ENCODE measurements at regions of chr6 and their contacts with region 1.

Region 1: GRCh38 chr6:109690737-109691621 is at the starts of genes AK9 and FIG4:
- DNase-seq: peak; percentile 94
- H3K4me3 Mint-ChIP-seq: peak within 1 kb of the TSS; percentile 83
- H3K27ac Mint-ChIP-seq: peak within 1 kb of the TSS; percentile 81
- H3K4me1 Mint-ChIP-seq: peaks cover 26% of the 10 kb centered on the region
- H3K27me3 Mint-ChIP-seq: no peaks in the 10 kb centered on the region
- total RNA-seq, gene AK9: 1.7 TPM
- total RNA-seq, gene FIG4: 14.0 to 16.4 TPM

Region 2: DNA sequence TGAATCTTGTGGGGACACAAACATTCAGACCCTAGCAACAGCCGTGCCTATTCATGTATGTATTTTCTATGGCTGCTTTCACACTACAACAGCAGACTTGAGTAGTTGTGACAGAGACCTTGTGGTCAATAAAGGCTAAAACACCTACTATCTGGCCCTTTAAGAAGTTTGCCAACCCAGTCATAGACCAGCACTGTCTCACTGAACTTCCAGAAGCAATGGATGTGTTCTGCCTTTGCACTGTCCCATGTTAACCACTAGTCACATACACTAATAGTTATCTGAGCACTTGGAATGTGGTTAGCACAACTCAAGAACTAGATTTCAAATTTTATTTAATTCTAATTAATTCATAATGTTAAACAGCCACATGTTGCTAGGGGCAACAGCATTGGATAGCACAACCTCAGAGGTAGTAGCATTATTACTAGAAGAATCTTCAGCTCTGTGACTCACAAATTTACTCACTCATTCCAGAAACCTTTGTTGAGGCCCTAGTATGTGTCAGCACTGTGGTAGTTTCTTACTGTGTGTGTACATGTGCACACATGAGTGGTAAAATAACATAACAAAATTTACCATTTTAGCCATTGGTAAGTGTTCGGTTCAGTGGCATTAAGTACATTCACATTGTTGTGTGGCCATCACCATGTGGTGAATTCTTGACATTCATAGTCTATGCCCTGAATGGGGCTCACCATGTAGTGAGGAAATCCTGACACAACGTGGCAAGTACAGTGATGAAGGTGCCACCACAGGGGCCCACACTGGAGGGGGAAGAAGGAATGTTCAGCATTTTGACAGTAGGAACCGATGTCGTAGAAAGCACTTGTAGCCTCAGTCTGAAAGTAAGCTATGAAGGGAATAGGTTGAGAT is 488.3 kb before region 1 on chr6:
- CTCF ChIA-PET with region 1: no interaction called
- intact Hi-C with region 1: loop called (anchors 5 kb)
- DNase-seq: peak; percentile 62
- H3K4me3 Mint-ChIP-seq: no peak overlapping the region
- H3K27ac Mint-ChIP-seq: no peak overlapping the region
- H3K4me1 Mint-ChIP-seq: peaks cover 7% of the 10 kb centered on the region
- H3K27me3 Mint-ChIP-seq: no peaks in the 10 kb centered on the region

Region 3: GRCh38 chr6:109455502-109456282 is 235.3 kb before region 1 on chr6 and contains the start of gene MICAL1:
- CTCF ChIA-PET with region 1: no interaction called
- intact Hi-C with region 1: loop called (anchors 2 kb)
- DNase-seq: peak; percentile 69
- H3K4me3 Mint-ChIP-seq: peak within 1 kb of the TSS; percentile 91
- H3K27ac Mint-ChIP-seq: peak within 1 kb of the TSS; percentile 82
- H3K4me1 Mint-ChIP-seq: peaks cover 54% of the 10 kb centered on the region
- H3K27me3 Mint-ChIP-seq: no peaks in the 10 kb centered on the region
- total RNA-seq, gene MICAL1: 20.4 to 22.9 TPM

Region 4: DNA sequence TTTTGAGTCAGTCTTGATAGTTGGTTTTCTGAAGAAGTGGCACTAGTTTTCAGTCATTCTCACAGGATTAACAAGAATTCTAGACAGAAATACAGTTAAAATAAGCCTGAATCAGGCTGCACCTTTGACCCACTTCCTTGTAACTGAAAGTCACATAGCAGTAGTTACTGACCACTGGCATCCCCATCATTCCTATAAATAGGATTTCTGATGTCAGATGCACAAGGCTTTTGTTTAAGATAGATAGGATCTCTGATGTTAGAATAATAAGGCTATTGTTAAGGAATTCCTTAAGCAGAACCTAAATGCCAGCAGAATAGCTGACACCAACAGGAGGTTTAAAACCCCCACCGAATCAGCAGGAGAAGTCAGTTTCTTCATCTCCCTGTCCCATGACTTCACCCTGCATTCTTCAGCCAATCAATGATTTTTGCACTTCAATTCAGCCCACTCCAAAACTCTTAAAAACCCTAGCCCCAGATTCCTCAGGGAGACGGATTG is 177.4 kb before region 1 on chr6:
- CTCF ChIA-PET with region 1: no interaction called
- intact Hi-C with region 1: loop called (anchors 2 kb)
- DNase-seq: no peak
- H3K4me3 Mint-ChIP-seq: no peak overlapping the region
- H3K27ac Mint-ChIP-seq: no peak overlapping the region
- H3K4me1 Mint-ChIP-seq: peaks cover 22% of the 10 kb centered on the region
- H3K27me3 Mint-ChIP-seq: no peaks in the 10 kb centered on the region

Region 5: GRCh38 chr6:109595998-109596397 is 95.0 kb before region 1 on chr6:
- CTCF ChIA-PET with region 1: interaction called, 4 read pairs
- intact Hi-C with region 1: loop called (anchors 1 kb)
- DNase-seq: peak; percentile 22
- H3K4me3 Mint-ChIP-seq: no peak overlapping the region
- H3K27ac Mint-ChIP-seq: no peak overlapping the region
- H3K4me1 Mint-ChIP-seq: peaks cover 4% of the 10 kb centered on the region
- H3K27me3 Mint-ChIP-seq: no peaks in the 10 kb centered on the region

Region 6: GRCh38 chr6:109660526-109661320 is 30.3 kb before region 1 on chr6:
- CTCF ChIA-PET with region 1: no interaction called
- intact Hi-C with region 1: loop called (anchors 1 kb)
- DNase-seq: peak; percentile 56
- H3K4me3 Mint-ChIP-seq: no peak overlapping the region
- H3K27ac Mint-ChIP-seq: no peak overlapping the region
- H3K4me1 Mint-ChIP-seq: peaks cover 14% of the 10 kb centered on the region
- H3K27me3 Mint-ChIP-seq: no peaks in the 10 kb centered on the region

Region 7: DNA sequence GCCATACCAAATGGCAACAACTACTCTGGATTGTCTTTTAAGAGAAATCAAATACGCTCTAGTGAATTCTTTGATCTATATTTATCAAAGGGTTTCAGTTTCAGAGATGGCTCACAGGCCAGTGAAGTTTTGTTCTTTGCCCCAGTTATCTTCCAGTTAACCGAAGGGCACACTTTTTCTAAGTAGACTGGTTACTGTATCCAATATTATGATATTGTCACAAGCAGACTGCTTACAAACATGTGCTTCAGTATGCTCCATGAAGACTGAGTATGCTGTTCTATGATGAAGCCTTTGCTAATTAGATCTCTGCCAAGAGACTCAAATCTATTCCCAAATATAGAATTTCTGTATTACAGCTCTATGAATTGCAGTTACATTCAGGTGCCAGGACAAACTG is 1611.0 kb after region 1 on chr6:
- CTCF ChIA-PET with region 1: no interaction called
- intact Hi-C with region 1: no loop called
- DNase-seq: no peak
- H3K4me3 Mint-ChIP-seq: no peak overlapping the region
- H3K27ac Mint-ChIP-seq: no peak overlapping the region
- H3K4me1 Mint-ChIP-seq: peaks cover 10% of the 10 kb centered on the region
- H3K27me3 Mint-ChIP-seq: no peaks in the 10 kb centered on the region